G401 (cell line): ENCODE measurements at regions of chr14 and their contacts with region 1.

Region 1: DNA sequence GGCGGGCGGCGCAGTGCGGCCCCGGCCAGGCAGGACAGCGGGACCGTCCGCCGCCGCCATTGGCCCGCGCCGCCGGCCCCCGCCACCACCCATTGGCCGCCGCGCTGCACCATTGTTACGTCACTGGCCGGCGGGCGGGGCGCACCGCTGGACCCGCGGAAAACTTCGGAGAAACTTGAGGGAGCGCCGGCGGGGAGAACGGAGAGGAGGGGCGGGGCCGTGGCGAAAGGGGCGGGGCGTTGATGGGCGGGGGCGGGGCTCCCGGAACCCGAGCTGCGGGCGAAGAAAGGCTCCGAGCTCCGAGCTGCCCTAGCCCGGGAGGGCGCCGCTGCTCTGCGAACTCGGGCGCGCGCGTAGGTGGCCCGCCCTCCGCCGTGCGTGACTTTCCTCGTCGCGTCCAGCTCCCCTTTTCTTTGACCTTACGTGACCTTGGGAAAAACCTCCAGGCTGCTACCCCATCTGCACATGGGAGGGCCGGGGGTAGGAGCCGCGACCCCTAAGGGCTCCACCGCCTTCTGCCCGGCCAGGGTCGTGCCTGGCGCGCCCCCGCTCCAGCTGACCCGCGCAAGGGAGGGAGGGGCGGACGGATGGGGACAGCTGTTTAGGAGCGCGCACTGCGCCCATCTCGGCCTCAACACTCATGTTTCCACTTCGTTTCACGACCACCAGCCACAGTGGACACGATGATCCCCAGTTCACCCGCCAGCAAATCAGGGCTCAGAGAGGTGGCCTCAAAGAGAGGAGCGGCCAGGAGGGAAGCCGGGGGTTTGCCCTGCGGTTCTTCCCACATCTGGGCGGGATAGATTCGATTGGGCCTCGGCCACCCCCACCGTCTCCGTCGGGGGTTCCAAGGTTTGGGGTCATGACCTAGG is at the start of gene ANKRD9:
- DNase-seq: peak; percentile 76
- total RNA-seq, gene ANKRD9: 19.9 and 30.6 TPM in 2 replicates

Region 2: GRCh38 chr14:102430212-102430908 is 79.6 kb before region 1 on chr14:
- in situ Hi-C with region 1: no loop called
- DNase-seq: no peak

Region 3: GRCh38 chr14:102442241-102443211 is 67.5 kb before region 1 on chr14:
- in situ Hi-C with region 1: loop called (anchors 5 kb)
- DNase-seq: peak; percentile 69